BJ (cell line): ENCODE measurements at regions of chrX and their contacts with region 1.

Region 1: GRCh38 chrX:68828740-68829552 is at the start of gene EFNB1:
- DNase-seq: peak; percentile 78
- H3K4me3 ChIP-seq: peak within 1 kb of the TSS; percentile 68
- H3K27me3 ChIP-seq: no peaks in the 10 kb centered on the region
- CTCF ChIP-seq: no peak
- polyA plus RNA-seq, gene EFNB1: 10.8 and 15.2 TPM in 2 replicates

Region 2: GRCh38 chrX:69060631-69061408 is 231.9 kb after region 1 on chrX:
- CTCF ChIA-PET with region 1: interaction called, 31 read pairs
- POLR2A ChIA-PET with region 1: no interaction called
- DNase-seq: no peak
- H3K4me3 ChIP-seq: no peak overlapping the region
- H3K27me3 ChIP-seq: no peaks in the 10 kb centered on the region
- CTCF ChIP-seq: peak; percentile 35

Region 3: GRCh38 chrX:69222103-69223090 is 393.5 kb after region 1 on chrX:
- CTCF ChIA-PET with region 1: interaction called, 90 read pairs
- POLR2A ChIA-PET with region 1: no interaction called
- DNase-seq: peak; percentile 1
- H3K4me3 ChIP-seq: no peak overlapping the region
- H3K27me3 ChIP-seq: no peaks in the 10 kb centered on the region; the same call in 1 of the 2 replicates
- CTCF ChIP-seq: peak; percentile 80

Region 4: GRCh38 chrX:69285881-69286564 is 457.1 kb after region 1 on chrX:
- CTCF ChIA-PET with region 1: interaction called, 22 read pairs
- POLR2A ChIA-PET with region 1: no interaction called
- DNase-seq: no peak
- H3K4me3 ChIP-seq: peak overlapping the region; percentile 37
- H3K27me3 ChIP-seq: no peaks in the 10 kb centered on the region
- CTCF ChIP-seq: peak; percentile 88